ENCODE measurements at regions of chr6 and their contacts with region 1.

Region 1: GRCh38 chr6:53651764-53652401 is 13.7 kb downstream of the KLHL31 start:
- DNase-seq: no peak
- H3K4me3 ChIP-seq: peak overlapping the region; percentile 58 to 73 (median 60)
- H3K27ac ChIP-seq: peak overlapping the region in 3 of 4 donors; percentile 11 to 68 (median 40)
- H3K4me1 ChIP-seq: peaks cover 25 to 33% (median 29%) of the 10 kb centered on the region in 4 donors
- H3K27me3 ChIP-seq: no peaks in the 10 kb centered on the region
- CTCF ChIP-seq: peak; percentile 36 to 43 (median 39)
- EP300 ChIP-seq: no peak
- POLR2A ChIP-seq: no peak

Region 2: DNA sequence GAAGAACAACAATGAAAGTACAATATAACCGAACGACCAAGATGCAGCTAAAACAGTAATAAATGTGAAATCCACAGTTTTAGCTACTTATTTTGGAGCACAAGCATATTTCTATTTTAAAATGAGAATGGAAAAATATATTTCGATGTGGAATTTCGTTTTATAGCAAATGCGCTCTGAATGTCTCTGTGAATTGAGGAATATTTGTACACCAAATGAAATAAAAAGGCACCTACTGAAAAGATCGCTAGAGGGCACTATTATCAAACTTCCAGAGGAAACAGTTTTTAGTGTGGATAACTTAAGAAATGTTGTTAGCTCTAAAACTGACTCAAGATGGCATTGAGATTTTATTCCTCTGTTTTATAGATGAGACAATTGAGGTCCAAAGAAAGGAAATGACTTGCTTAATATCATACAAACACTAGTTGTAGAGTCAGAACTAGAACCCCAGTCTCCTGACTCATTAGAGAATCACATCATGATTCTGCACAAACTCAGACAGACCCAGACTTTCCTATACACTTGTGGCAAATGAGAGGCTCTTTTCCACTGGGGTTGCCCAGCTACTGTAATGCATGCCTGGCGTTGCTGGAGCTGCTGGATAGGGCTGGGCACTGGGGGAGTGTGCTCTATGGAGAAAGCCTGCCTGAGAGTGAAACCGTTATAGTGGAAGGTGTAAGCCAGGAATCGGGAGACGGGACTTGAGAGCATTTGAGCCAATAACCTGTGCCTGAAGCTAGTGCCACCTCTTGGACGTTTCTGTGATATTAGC is 158.8 kb before region 1 on chr6:
- intact Hi-C with region 1: loop called (anchors 5 kb)
- DNase-seq: no peak
- H3K4me3 ChIP-seq: peak overlapping the region; percentile 13 to 32 (median 22)
- H3K27ac ChIP-seq: peak overlapping the region in 3 of 4 donors; percentile 22 to 60 (median 56)
- H3K4me1 ChIP-seq: peaks cover 0 to 49% (median 47%) of the 10 kb centered on the region in 4 donors
- H3K27me3 ChIP-seq: no peaks in the 10 kb centered on the region
- CTCF ChIP-seq: peak; percentile 67 to 78 (median 71)
- EP300 ChIP-seq: no peak
- POLR2A ChIP-seq: no peak

Region 3: GRCh38 chr6:53513519-53513966 is 138.3 kb before region 1 on chr6:
- intact Hi-C with region 1: loop called (anchors 5 kb)
- DNase-seq: no peak
- H3K4me3 ChIP-seq: no peak overlapping the region
- H3K27ac ChIP-seq: peak overlapping the region in 3 of 4 donors; percentile 36 to 67 (median 38)
- H3K4me1 ChIP-seq: peaks cover 0 to 53% (median 31%) of the 10 kb centered on the region in 4 donors
- H3K27me3 ChIP-seq: no peaks in the 10 kb centered on the region
- CTCF ChIP-seq: peak; percentile 32 to 49 (median 42)
- EP300 ChIP-seq: no peak
- POLR2A ChIP-seq: no peak

Region 4: DNA sequence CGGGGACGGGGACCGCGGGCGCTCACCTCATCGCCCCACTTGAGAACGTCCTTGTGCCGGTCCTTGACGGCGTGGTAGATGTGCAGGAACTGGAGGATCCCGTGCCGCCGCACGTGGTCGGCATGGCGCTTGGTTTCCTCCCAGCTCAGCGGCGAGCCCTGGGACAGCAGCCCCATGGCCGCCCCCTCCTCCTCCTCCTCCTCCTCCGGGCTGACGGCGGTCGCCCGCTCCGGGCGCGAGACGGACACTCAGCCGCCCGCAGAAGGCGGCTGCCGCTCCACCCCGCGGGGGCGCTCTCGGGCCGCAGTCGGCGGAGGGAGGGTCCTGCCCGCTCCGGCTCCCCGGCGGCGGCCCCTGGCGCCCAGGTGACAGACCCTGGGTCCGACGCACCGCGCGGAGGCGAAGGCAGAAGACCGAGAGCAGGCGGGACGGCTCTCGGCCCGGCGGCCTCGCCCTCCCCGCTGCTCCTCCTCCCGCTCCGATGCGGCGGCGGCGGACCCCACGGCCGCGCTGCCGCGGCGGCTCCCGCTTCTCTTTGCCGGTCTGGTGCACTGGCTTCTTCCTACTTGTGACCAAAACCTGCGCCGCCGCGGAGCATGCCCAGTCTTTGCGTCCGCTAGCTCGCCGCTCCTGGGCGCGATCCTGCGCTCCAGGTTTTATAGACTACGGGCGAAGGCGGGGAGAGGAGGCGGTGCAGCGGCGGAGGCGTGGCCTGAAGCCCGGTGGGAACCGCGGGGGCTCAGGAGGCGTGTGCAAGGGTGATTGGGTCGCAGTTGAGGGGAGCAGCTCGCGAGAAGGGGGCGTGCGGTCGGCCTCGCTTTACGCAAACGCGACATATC is 107.2 kb before region 1 on chr6 and contains the start of gene GCLC:
- intact Hi-C with region 1: loop called (anchors 2 kb)
- DNase-seq: peak; percentile 98
- H3K4me3 ChIP-seq: peak within 1 kb of the TSS; percentile 77 to 98 (median 86)
- H3K27ac ChIP-seq: peak within 1 kb of the TSS; percentile 95 to 99 (median 98)
- H3K4me1 ChIP-seq: peaks cover 25 to 72% (median 68%) of the 10 kb centered on the region in 4 donors
- H3K27me3 ChIP-seq: no peaks in the 10 kb centered on the region
- CTCF ChIP-seq: peak; percentile 72 to 83 (median 78)
- EP300 ChIP-seq: no peak
- POLR2A ChIP-seq: peak; percentile 58
- total RNA-seq, gene GCLC: 57.7 to 70.8 (median 64.6) TPM

Region 5: GRCh38 chr6:53718597-53719460 is 66.9 kb after region 1 on chr6:
- intact Hi-C with region 1: loop called (anchors 5 kb)
- DNase-seq: no peak
- H3K4me3 ChIP-seq: no peak overlapping the region
- H3K27ac ChIP-seq: no peak overlapping the region
- H3K4me1 ChIP-seq: no peaks in the 10 kb centered on the region
- H3K27me3 ChIP-seq: no peaks in the 10 kb centered on the region
- CTCF ChIP-seq: peak; percentile 67 to 85 (median 78)
- EP300 ChIP-seq: no peak
- POLR2A ChIP-seq: no peak